OCI-LY7 (cell line): ENCODE measurements at regions of chr1 and their contacts with region 1.

Region 1: DNA sequence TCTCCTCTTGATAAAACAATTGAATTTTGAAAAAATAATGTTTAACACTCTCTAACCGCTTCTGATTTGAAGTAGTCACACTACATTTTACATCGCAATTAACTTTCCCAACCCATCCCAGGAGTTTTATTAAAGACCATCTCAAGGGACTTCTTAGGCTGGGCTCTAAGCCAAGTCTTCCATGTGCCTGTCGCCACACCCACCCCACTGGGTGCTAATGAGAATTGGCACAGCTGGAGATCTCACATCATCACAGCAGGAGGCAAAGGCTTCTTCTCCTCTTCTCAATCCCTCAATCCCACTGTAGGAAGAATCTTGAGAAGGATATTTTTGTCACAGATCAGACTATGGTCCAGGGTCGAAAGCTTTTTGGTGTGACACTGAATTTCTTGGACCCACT is 328.9 kb downstream of the NUF2 start:
- DNase-seq: no peak
- H3K4me3 ChIP-seq: no peak overlapping the region
- H3K27ac ChIP-seq: no peak overlapping the region
- H3K4me1 ChIP-seq: no peaks in the 10 kb centered on the region
- CTCF ChIP-seq: no peak

Region 2: DNA sequence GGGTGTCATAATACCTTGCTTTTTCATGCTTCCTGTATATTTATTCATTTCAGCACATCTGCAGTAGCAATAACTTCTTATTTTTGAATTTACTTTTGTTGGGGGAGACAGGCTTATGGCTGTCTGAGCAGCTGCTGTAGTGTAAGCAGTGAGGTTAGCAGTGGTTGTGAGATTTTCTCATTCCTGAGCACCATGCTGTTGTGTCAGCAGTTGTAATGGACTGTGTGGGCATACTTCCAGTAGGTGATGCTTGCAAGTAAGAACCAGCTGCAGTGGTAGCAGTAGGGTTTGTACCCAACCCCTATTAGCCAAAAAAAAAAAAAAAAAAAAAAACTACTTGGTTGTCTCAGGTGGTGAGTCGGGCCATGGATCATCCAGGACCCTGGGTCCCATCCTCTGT is 17.3 kb before region 1 on chr1:
- CTCF ChIA-PET with region 1: no interaction called
- POLR2A ChIA-PET with region 1: interaction called, 3 read pairs
- intact Hi-C with region 1: loop called (anchors 2 kb)
- DNase-seq: no peak
- H3K4me3 ChIP-seq: no peak overlapping the region
- H3K27ac ChIP-seq: no peak overlapping the region
- H3K4me1 ChIP-seq: no peaks in the 10 kb centered on the region
- CTCF ChIP-seq: no peak

Region 3: GRCh38 chr1:163664671-163665335 is 14.2 kb after region 1 on chr1:
- CTCF ChIA-PET with region 1: no interaction called
- POLR2A ChIA-PET with region 1: no interaction called
- intact Hi-C with region 1: no loop called
- DNase-seq: no peak
- H3K4me3 ChIP-seq: no peak overlapping the region
- H3K27ac ChIP-seq: no peak overlapping the region
- H3K4me1 ChIP-seq: no peaks in the 10 kb centered on the region
- CTCF ChIP-seq: no peak

Region 4: DNA sequence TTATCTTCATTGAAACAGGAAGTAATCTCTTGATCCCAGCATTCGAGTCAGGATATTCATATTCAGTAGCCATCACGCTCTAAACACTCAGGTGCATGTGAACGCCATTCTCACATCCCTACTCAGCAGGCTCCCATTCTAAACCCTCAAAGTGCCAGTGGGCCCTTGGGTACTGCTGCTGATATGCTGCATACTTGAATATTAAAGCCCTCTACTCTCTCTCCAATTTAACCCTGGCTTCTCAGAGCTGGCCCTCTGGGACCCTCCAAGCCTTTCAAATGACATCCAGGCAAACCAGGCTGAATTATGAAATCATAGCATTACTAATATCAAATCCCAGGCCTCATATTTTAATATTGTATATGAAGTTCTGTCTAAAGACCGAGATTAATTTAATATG is 139.3 kb after region 1 on chr1:
- CTCF ChIA-PET with region 1: no interaction called
- POLR2A ChIA-PET with region 1: no interaction called
- intact Hi-C with region 1: no loop called
- DNase-seq: no peak
- H3K4me3 ChIP-seq: no peak overlapping the region
- H3K27ac ChIP-seq: no peak overlapping the region
- H3K4me1 ChIP-seq: no peaks in the 10 kb centered on the region
- CTCF ChIP-seq: no peak

Region 5: GRCh38 chr1:163824006-163824405 is 173.4 kb after region 1 on chr1:
- CTCF ChIA-PET with region 1: no interaction called
- POLR2A ChIA-PET with region 1: no interaction called
- intact Hi-C with region 1: no loop called
- DNase-seq: no peak
- H3K4me3 ChIP-seq: no peak overlapping the region
- H3K27ac ChIP-seq: no peak overlapping the region
- H3K4me1 ChIP-seq: no peaks in the 10 kb centered on the region
- CTCF ChIP-seq: no peak